PC-9 (cell line): ENCODE measurements at regions of chr5 and their contacts with region 1.

Region 1: GRCh38 chr5:17132444-17133083 is 84.9 kb upstream of the BASP1 start:
- DNase-seq: no peak
- H3K4me3 ChIP-seq: no peak overlapping the region
- H3K27ac ChIP-seq: no peak overlapping the region
- H3K4me1 ChIP-seq: peaks cover 10% of the 10 kb centered on the region
- H3K27me3 ChIP-seq: no peaks in the 10 kb centered on the region
- CTCF ChIP-seq: peak; percentile 92

Region 2: GRCh38 chr5:16906255-16906654 is 226.3 kb before region 1 on chr5:
- CTCF ChIA-PET with region 1: no interaction called
- POLR2A ChIA-PET with region 1: interaction called, 13 read pairs
- intact Hi-C with region 1: no loop called
- DNase-seq: peak in 1 of 2 experiments; percentile 64
- H3K4me3 ChIP-seq: no peak overlapping the region
- H3K27ac ChIP-seq: no peak overlapping the region
- H3K4me1 ChIP-seq: peaks cover 13% of the 10 kb centered on the region
- H3K27me3 ChIP-seq: no peaks in the 10 kb centered on the region
- CTCF ChIP-seq: no peak

Region 3: GRCh38 chr5:17113163-17113958 is 19.2 kb before region 1 on chr5:
- CTCF ChIA-PET with region 1: interaction called, 14 read pairs
- POLR2A ChIA-PET with region 1: interaction called, 8 read pairs
- intact Hi-C with region 1: no loop called
- DNase-seq: peak in 1 of 2 experiments; percentile 84
- H3K4me3 ChIP-seq: peak overlapping the region; percentile 26; the same call in 1 of the 2 replicates
- H3K27ac ChIP-seq: peak overlapping the region; percentile 69
- H3K4me1 ChIP-seq: peaks cover 38% of the 10 kb centered on the region
- H3K27me3 ChIP-seq: no peaks in the 10 kb centered on the region
- CTCF ChIP-seq: no peak